ENCODE measurements at regions of chr10 and their contacts with region 1.

Region 1: GRCh38 chr10:52313933-52314816 is at the start of gene DKK1:
- DNase-seq: peak; percentile 86
- ATAC-seq: peak; percentile 75
- H3K4me3 ChIP-seq: peak within 1 kb of the TSS; percentile 78 to 93
- H3K27ac ChIP-seq: peak within 1 kb of the TSS; percentile 96
- H3K4me1 ChIP-seq: peaks cover 50 to 73% of the 10 kb centered on the region in 2 experiments
- H3K27me3 ChIP-seq: no peaks in the 10 kb centered on the region
- CTCF ChIP-seq: peak; percentile 79 to 95 (median 87)
- POLR2A ChIP-seq: peak; percentile 100
- RAD21 ChIP-seq: peak; percentile 69
- total RNA-seq, gene DKK1: 315 TPM

Region 2: DNA sequence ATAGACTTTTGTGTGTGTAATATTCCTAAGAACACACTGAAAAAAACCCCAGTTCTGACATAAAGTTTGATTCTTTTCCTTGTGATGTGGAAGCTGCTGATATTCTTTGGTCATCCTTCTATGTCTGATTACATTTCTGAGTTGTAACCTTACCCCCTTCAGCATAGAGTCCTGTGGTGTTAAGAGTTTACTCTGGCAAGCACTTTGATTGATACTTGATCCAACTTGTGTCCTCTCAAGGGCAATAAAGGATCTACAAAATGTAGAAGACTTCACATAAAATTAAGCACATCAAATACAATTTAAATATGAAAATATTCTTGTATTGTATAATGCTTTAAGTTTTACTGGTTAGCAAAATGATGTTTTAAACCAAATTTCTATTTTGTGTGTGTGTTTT is 221.8 kb before region 1 on chr10:
- CTCF ChIA-PET with region 1: no interaction called
- POLR2A ChIA-PET with region 1: no interaction called
- RAD21 ChIA-PET with region 1: no interaction called
- intact Hi-C with region 1: no loop called
- DNase-seq: no peak
- ATAC-seq: no peak
- H3K4me3 ChIP-seq: no peak overlapping the region
- H3K27ac ChIP-seq: no peak overlapping the region
- H3K4me1 ChIP-seq: no peaks in the 10 kb centered on the region
- H3K27me3 ChIP-seq: no peaks in the 10 kb centered on the region
- CTCF ChIP-seq: no peak
- POLR2A ChIP-seq: no peak
- RAD21 ChIP-seq: no peak

Region 3: GRCh38 chr10:52297747-52298146 is 16.4 kb before region 1 on chr10:
- CTCF ChIA-PET with region 1: no interaction called
- POLR2A ChIA-PET with region 1: no interaction called
- RAD21 ChIA-PET with region 1: no interaction called
- intact Hi-C with region 1: no loop called
- DNase-seq: no peak
- ATAC-seq: no peak
- H3K4me3 ChIP-seq: no peak overlapping the region
- H3K27ac ChIP-seq: no peak overlapping the region
- H3K4me1 ChIP-seq: no peaks in the 10 kb centered on the region
- H3K27me3 ChIP-seq: no peaks in the 10 kb centered on the region
- CTCF ChIP-seq: no peak
- POLR2A ChIP-seq: no peak
- RAD21 ChIP-seq: no peak

Region 4: DNA sequence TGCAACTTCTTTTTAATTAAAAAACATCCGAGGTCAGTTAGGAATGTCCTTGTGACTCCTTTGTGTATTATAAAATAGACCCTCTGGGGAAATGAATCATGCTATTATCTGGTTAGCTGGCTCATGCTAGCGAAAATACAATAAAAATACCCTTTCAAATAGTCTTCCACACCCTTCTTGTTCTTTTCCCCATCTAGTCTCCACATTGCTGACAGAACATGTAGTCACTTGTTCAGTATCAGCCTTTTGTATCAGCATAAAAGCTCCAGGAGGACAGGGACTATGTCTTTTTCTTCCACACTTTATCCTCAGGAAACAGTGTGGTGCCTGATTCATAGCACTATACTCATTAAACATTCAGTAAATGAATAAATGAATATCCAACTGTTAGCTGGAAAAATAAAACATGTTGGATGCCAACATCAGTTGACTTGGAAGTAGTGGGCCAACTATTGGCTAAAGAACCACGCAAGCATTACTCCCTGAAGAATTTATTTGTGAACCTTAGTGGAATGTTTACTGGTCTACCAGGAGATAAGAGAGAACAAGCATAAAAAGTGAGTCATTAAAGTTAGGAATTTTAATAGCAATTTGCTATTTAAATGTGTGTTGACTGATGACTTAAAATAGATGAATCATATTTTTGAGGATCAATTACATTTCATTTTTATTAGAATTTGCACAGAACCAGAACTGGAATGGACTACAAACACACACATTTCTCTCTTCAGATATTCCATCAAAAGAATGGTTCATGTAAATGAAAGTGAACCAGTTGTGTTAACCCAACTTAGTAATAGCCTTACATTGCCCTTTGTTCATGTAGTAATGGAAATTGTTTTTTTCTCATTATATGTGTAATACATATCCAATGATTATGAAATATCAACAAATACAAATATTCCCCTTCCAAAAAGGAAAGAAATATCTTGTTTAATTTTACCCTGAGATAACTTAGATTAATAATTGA is 129.5 kb after region 1 on chr10:
- CTCF ChIA-PET with region 1: no interaction called
- POLR2A ChIA-PET with region 1: interaction called, 13 read pairs
- RAD21 ChIA-PET with region 1: no interaction called
- intact Hi-C with region 1: no loop called
- DNase-seq: peak; percentile 57
- ATAC-seq: peak; percentile 73
- H3K4me3 ChIP-seq: peak overlapping the region in 1 of 2 experiments; percentile 9; a peak in 2 of 4 replicates
- H3K27ac ChIP-seq: peak overlapping the region; percentile 98
- H3K4me1 ChIP-seq: peaks cover 37 to 64% of the 10 kb centered on the region in 2 experiments
- H3K27me3 ChIP-seq: no peaks in the 10 kb centered on the region
- CTCF ChIP-seq: no peak
- POLR2A ChIP-seq: no peak
- RAD21 ChIP-seq: no peak; the same call in 1 of the 2 replicates

Region 5: DNA sequence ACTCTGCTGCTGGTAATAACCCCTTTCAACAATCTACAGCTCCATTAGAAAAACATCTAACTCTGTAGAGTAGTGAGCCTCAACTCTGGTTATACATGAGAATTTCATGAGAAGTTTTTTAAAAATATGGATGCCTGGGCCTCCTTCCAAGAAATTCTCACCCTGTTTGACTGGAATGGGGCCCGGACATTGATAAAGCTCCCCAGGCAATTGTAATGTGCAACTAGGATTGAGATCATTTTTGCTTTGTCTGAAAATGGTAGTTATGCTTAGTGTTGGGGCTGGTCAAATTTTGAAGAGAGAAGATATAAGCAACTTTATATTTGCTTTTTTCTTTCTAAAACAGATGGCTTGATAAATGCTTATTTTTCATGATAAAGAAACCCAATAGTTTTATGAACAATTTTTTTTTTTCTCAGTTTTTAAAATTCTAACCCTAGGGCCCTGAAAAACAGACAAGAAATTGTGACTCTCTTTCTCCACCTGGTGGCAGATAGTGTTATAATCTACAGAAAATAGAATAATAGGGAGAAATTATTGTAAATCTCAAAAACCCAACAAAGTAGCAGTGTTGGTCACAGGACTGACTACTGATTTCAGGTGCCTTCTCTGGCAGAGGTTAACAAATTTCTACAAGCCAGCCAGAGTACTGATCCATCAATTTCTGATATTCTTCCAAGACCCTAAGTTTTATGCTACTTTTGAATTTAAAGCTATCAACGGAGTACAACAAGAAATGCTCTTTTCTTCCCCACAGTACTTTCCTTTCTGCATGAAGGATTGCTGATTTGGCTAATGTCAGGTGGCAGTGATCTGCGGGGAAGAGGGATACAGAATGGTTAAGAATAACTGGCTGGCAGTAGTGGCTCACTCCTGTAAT is 174.7 kb after region 1 on chr10:
- CTCF ChIA-PET with region 1: interaction called, 36 read pairs
- POLR2A ChIA-PET with region 1: interaction called, 33 read pairs
- RAD21 ChIA-PET with region 1: interaction called, 3 read pairs
- intact Hi-C with region 1: loop called (anchors 1 kb)
- DNase-seq: no peak
- ATAC-seq: peak; percentile 61; the same call in 1 of the 2 replicates
- H3K4me3 ChIP-seq: no peak overlapping the region
- H3K27ac ChIP-seq: peak overlapping the region; percentile 62; the same call in 1 of the 2 replicates
- H3K4me1 ChIP-seq: peaks cover 18 to 48% of the 10 kb centered on the region in 2 experiments
- H3K27me3 ChIP-seq: no peaks in the 10 kb centered on the region
- CTCF ChIP-seq: peak; percentile 30 to 66 (median 63); a peak in 4 of 6 replicates
- POLR2A ChIP-seq: no peak
- RAD21 ChIP-seq: peak; percentile 71

Region 6: DNA sequence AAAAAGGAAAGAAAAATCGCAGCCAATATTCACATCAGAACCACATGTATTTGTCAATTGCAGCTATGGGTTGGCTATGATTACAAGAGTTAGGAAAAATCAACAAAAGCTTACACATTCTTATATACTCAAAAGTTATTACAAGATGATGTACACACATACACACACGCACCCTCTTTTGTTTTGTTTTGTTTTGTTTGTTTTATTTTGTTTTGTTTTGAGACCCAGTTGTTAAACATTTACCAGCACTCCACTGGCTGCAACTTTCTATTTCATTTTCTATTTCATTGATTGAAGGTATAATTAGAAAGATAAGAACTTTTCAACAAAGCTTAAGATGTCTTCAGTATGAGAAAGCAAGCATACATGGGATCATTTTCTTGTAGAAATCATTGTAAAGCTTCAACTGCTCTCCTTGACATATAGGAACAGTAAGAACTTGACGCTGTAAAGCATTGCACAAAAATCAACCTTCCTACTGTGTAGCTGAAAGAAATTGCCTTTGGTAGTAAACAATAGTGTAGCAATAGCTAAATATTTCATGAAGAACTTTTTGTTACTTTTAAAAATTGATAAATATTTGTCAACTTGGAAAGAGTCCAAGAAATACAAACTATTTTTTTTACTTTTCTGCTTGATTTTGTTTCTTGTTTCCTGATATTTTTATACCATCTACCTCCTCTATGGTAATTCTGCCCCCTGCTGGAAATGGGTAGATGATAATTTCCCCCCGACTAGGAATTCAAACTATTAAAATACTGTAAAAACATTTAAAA is 252.5 kb after region 1 on chr10:
- CTCF ChIA-PET with region 1: interaction called, 60 read pairs
- POLR2A ChIA-PET with region 1: interaction called, 8 read pairs
- RAD21 ChIA-PET with region 1: no interaction called
- intact Hi-C with region 1: no loop called
- DNase-seq: peak; percentile 35
- ATAC-seq: 0 out of 2 replicates have a peak, but pooled peaks have one; percentile 60
- H3K4me3 ChIP-seq: no peak overlapping the region
- H3K27ac ChIP-seq: peak overlapping the region; percentile 2; the same call in 1 of the 2 replicates
- H3K4me1 ChIP-seq: peaks cover 3 to 5% of the 10 kb centered on the region in 2 experiments; a peak in 3 of 4 replicates
- H3K27me3 ChIP-seq: no peaks in the 10 kb centered on the region
- CTCF ChIP-seq: peak; percentile 48 to 75 (median 58)
- POLR2A ChIP-seq: no peak
- RAD21 ChIP-seq: peak; percentile 77